T-cell (primary cell): ENCODE measurements at regions of chr5 and their contacts with region 1.

Region 1: GRCh38 chr5:151758430-151759241 is at the start of gene ATOX1:
- DNase-seq: peak; percentile 73 to 94 (median 86)
- ATAC-seq: peak; percentile 99 to 100 (median 99)
- H3K4me3 ChIP-seq: peak within 1 kb of the TSS; percentile 68 to 83
- H3K4me3 Mint-ChIP-seq: peak within 1 kb of the TSS; percentile 86 to 94 (median 89)
- H3K27ac ChIP-seq: peak within 1 kb of the TSS; percentile 66
- H3K27ac Mint-ChIP-seq: peak within 1 kb of the TSS; percentile 91 to 98
- H3K4me1 ChIP-seq: peaks cover 10 to 28% of the 10 kb centered on the region in 2 experiments
- H3K4me1 Mint-ChIP-seq: peaks cover 39 to 43% (median 41%) of the 10 kb centered on the region in 3 donors
- H3K27me3 ChIP-seq: no peaks in the 10 kb centered on the region
- H3K27me3 Mint-ChIP-seq: no peaks in the 10 kb centered on the region
- total RNA-seq, gene ATOX1: 21.4 to 33.8 (median 30.9) TPM

Region 2: GRCh38 chr5:151724360-151724759 is 34.3 kb before region 1 on chr5:
- CTCF ChIA-PET with region 1: no interaction called
- POLR2A ChIA-PET with region 1: no interaction called
- DNase-seq: no peak
- ATAC-seq: no peak
- H3K4me3 ChIP-seq: no peak overlapping the region
- H3K4me3 Mint-ChIP-seq: no peak overlapping the region
- H3K27ac ChIP-seq: no peak overlapping the region
- H3K27ac Mint-ChIP-seq: no peak overlapping the region
- H3K4me1 ChIP-seq: no peaks in the 10 kb centered on the region
- H3K4me1 Mint-ChIP-seq: peaks cover 0 to 2% (median 0%) of the 10 kb centered on the region in 3 donors
- H3K27me3 ChIP-seq: no peaks in the 10 kb centered on the region
- H3K27me3 Mint-ChIP-seq: no peaks in the 10 kb centered on the region

Region 3: GRCh38 chr5:151771259-151772028 is 12.8 kb after region 1 on chr5 and contains the start of gene G3BP1:
- CTCF ChIA-PET with region 1: interaction called, 6 to 16 read pairs
- POLR2A ChIA-PET with region 1: interaction called, 6 to 10 read pairs
- DNase-seq: peak; percentile 94 to 100 (median 100)
- ATAC-seq: peak; percentile 78 to 81 (median 80)
- H3K4me3 ChIP-seq: peak within 1 kb of the TSS; percentile 88 to 96
- H3K4me3 Mint-ChIP-seq: peak within 1 kb of the TSS in 2 of 3 donors; percentile 79 to 85
- H3K27ac ChIP-seq: peak within 1 kb of the TSS; percentile 94
- H3K27ac Mint-ChIP-seq: peak within 1 kb of the TSS; percentile 40 to 64
- H3K4me1 ChIP-seq: peaks cover 24 to 25% of the 10 kb centered on the region in 2 experiments
- H3K4me1 Mint-ChIP-seq: peaks cover 45 to 52% (median 47%) of the 10 kb centered on the region in 3 donors
- H3K27me3 ChIP-seq: no peaks in the 10 kb centered on the region
- H3K27me3 Mint-ChIP-seq: no peaks in the 10 kb centered on the region
- total RNA-seq, gene G3BP1: 109 to 185 (median 170) TPM